ENCODE measurements at regions of chr1 and their contacts with region 1.

Region 1: GRCh38 chr1:89987170-89987819 is 7.6 kb upstream of the ZNF326 start:
- DNase-seq: peak; percentile 76

Region 2: GRCh38 chr1:89622895-89623294 is 364.4 kb before region 1 on chr1:
- in situ Hi-C with region 1: loop called (anchors 10 kb)
- DNase-seq: peak; percentile 17

Region 3: GRCh38 chr1:89953072-89953626 is 34.1 kb before region 1 on chr1:
- in situ Hi-C with region 1: no loop called
- DNase-seq: peak; percentile 67

Measured in KBM-7 (cell line).